Esophagus squamous epithelium (tissue), 5 donors: ENCODE measurements at regions of chr7 and their contacts with region 1.

Region 1: DNA sequence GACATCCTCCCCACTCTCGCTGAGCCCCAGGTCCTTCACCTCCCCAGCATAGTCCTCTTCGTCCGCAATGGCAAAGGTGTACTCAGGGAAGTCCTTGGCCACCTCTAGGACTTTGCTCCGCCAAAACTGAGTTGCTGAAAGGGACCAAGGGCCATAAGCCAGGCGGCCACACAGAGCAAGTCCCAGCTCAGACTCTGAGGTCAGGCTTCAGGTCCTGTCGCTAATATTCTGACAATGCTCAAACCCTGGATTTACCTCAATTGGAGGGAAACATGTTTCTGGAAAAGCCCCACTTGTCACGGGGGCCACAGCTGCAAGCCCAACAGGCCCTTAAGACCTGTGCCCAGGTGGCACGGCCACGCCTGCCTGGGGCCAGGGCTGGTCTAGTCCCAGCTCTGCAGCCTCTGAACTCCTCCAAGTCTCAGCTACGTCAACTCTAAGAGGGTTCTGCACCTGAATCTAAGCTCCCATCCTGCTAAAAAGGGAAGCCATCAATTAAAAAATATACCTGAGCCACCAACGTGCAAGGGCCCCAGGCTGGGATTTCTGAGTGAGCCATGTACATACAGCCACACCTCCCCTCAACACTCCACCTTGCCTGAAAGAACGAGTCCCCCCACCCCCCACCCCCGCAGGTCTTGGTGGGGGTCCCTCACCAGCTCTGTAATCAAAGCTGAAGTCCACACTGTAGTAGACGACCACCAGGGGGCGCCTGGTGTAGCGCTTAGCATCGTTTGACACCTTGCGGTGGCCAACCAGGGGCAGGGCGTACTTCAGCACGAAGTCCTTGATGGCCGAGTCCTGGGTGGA is 22.9 kb downstream of the PDIA4 start:
- DNase-seq: no peak
- H3K4me3 ChIP-seq: no peak overlapping the region
- H3K27ac ChIP-seq: no peak overlapping the region
- H3K4me1 ChIP-seq: peaks cover 0 to 8% (median 0%) of the 10 kb centered on the region in 3 donors
- H3K27me3 ChIP-seq: no peaks in the 10 kb centered on the region
- CTCF ChIP-seq: peak; percentile 72 to 93 (median 78)
- POLR2A ChIP-seq: no peak

Region 2: GRCh38 chr7:148753224-148753623 is 252.2 kb before region 1 on chr7:
- intact Hi-C with region 1: no loop called
- DNase-seq: no peak
- H3K4me3 ChIP-seq: no peak overlapping the region
- H3K27ac ChIP-seq: no peak overlapping the region
- H3K4me1 ChIP-seq: no peaks in the 10 kb centered on the region
- H3K27me3 ChIP-seq: no peaks in the 10 kb centered on the region
- CTCF ChIP-seq: no peak
- POLR2A ChIP-seq: no peak

Region 3: DNA sequence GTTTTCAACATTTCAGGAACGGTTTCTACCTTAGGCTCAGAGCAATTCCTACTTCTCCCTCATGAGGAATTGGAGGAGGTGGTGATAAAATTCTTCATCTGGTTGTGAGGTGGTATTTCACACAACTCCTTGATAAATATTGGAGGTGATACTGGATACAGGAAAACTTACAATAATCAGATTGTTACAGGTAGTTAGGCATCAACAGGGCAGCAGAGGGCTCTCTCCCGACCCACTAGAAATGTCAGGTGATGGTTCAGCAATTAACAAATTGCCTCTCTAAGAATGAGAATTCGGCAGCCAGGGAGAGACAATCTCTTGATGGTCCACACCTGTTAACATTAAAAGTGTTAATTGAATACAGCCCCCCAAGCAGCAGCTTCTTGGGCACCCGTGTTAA is 62.4 kb after region 1 on chr7:
- intact Hi-C with region 1: loop called (anchors 10 kb)
- DNase-seq: no peak
- H3K4me3 ChIP-seq: no peak overlapping the region
- H3K27ac ChIP-seq: peak overlapping the region in 1 of 4 donors; percentile 17
- H3K4me1 ChIP-seq: peaks cover 0 to 14% (median 0%) of the 10 kb centered on the region in 3 donors
- H3K27me3 ChIP-seq: no peaks in the 10 kb centered on the region
- CTCF ChIP-seq: peak in 1 of 6 experiments; percentile 27
- POLR2A ChIP-seq: no peak

Region 4: DNA sequence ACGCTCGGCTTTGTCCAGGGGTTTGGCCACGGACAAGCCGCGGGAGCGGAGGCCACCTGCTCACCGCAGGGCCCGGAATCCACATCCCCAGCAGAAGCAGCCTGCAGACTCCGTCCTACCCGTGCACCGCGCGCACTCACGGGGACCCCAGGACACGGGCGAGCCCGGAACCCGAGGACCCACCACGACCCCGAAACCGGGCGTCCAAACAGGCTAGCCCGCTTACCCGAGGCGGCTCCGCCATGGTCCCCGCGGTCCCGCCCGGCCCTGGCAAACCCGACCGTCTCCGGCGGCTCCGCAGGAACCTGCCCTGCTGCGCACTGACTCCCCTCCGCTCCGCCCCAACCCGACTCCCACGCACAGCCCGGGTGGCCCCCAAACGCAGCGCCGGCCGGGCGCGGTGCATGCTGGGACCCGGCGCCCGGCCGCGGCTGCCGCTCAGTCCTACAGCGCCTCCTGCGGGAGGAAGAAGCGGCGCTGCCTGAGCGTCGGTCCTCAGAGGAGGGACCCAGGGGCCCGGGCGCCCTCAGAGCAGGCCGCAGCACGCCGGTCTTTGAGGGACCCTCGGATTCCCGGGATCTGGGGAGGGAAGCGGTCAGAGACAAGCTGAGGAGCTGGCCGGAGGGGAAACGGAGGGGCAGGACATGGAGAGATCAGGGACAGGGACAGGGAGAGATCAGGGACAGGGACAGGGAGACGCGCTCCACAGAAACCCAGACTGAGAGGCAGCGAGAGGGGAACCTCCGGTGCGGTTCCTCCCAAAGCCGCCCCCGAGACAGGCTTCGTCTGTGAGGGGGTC is 85.2 kb after region 1 on chr7 and contains the start of gene ZNF786:
- intact Hi-C with region 1: loop called (anchors 5 kb)
- DNase-seq: peak; percentile 50
- H3K4me3 ChIP-seq: peak within 1 kb of the TSS; percentile 80 to 97 (median 92)
- H3K27ac ChIP-seq: peak within 1 kb of the TSS; percentile 96 to 98 (median 98)
- H3K4me1 ChIP-seq: peaks cover 8 to 21% (median 11%) of the 10 kb centered on the region in 3 donors
- H3K27me3 ChIP-seq: no peaks in the 10 kb centered on the region
- CTCF ChIP-seq: peak; percentile 93 to 99 (median 96)
- POLR2A ChIP-seq: peak in 3 of 4 donors; percentile 56 to 88 (median 86)
- total RNA-seq, gene ZNF786: 3.5 to 11.4 (median 6.1) TPM